ENCODE measurements at regions of chr1 and their contacts with region 1.

Region 1: GRCh38 chr1:226407497-226408284 is at the start of gene PARP1:
- DNase-seq: peak; percentile 97
- CTCF ChIP-seq: peak; percentile 72

Region 2: DNA sequence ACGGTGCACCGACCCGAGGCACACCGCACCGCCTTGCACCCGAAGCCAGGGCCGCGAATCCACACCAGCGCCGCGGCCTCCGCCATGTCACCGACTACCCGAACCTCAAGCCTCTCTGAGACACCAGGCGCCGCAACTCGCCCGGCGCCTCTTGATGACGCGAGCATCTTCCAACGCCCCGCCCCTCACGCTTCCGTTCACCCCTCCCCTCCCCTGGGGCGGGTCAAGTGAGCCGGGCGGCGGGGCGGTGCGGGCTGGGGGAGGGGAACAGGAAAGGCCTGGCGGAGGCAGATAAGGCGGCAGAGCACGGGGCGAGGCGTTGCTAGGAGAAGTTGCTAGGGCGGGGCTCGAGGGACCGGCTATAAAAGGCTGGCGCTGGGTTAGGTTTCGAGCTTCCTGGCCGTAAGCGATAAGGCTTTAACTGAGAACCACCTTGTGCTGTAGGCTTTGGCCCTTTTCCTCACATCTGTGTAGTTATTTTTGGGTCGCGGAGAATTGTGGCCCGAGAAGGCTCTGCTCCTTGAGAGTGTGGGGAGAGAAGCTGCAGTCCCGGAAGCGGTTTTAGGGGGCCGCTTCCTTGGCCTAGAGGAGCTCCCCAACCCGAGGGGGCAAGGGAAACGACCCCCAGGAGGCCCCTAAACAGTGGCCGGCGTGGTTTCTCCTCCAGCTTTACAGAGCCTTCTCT is 408.3 kb before region 1 on chr1 and contains the start of gene SDE2:
- CTCF ChIA-PET with region 1: no interaction called
- POLR2A ChIA-PET with region 1: no interaction called
- DNase-seq: peak; percentile 97
- CTCF ChIP-seq: no peak

Region 3: GRCh38 chr1:226046240-226046639 is 361.5 kb before region 1 on chr1:
- CTCF ChIA-PET with region 1: no interaction called
- POLR2A ChIA-PET with region 1: no interaction called
- DNase-seq: no peak
- CTCF ChIP-seq: no peak

Region 4: DNA sequence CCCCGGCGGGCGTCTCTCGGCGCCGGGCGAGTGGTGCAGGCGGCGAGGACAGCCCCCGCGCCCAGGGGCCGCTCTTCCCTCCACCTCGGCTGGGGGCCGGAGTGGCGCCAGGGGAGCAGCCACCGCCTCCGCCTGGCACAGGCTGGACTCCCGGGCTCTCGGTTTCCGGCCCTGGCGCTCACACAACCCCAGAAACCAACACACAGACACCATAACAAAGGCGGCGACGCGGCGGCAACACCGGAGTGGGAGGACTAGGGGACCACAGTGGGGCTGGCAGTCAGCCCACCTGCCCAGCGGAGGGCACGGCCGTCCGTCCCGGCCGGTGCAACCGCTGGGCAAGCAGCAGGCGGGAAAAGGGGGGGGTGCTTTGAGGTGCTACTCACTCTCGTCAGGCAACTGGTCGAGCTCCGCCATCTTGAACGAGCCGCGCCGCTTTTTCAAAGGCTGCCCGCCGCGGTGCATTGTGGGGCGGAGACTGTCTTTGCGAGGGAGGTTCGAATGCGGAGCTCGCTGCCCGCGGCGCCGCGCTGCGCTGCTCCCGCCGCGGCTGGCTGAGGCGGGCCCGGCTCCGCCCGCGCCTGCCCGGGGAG is 98.9 kb before region 1 on chr1 and contains the start of gene LIN9:
- CTCF ChIA-PET with region 1: interaction called, 12 read pairs
- POLR2A ChIA-PET with region 1: interaction called, 3 read pairs
- DNase-seq: peak; percentile 92
- CTCF ChIP-seq: no peak

Region 5: GRCh38 chr1:226390326-226391080 is 17.2 kb before region 1 on chr1:
- CTCF ChIA-PET with region 1: interaction called, 74 read pairs
- POLR2A ChIA-PET with region 1: no interaction called
- DNase-seq: no peak
- CTCF ChIP-seq: no peak

Region 6: DNA sequence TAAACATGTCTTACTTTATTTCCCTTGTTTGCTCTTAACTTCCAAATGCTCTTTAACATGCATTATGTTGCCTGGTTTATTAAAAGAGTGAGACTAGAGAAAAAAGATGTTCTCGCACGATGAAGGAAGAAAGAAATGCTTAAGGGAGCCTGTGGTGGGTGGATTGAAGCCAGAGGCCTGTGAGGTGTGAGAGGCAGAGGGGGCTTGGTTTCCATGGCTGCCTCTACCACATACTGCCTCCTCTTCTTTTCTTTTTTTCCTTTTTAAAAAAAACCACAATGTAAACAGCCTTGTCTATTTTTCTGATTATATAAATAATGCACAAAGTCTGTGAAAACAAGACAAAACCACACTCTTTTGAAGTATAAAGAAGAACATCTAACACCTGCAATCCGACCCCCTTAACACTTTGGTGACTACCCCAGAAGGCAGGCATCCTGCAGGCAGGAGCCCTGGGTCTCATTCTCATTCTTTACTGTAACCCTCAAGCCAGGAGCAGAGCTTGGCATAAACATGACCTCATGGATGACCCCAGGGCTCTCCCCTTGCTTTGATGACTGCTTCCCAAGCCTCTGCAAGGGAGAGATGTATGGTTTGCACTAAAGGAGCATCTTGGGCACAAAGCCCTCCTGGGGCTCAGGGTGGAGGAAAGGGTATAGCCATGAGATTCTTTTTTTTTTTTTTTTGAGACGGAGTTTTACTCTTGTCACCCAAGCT is 10.3 kb after region 1 on chr1:
- CTCF ChIA-PET with region 1: interaction called, 33 read pairs
- POLR2A ChIA-PET with region 1: no interaction called
- DNase-seq: no peak
- CTCF ChIP-seq: no peak

Region 7: GRCh38 chr1:226438007-226438406 is 30.3 kb after region 1 on chr1:
- CTCF ChIA-PET with region 1: interaction called, 10 read pairs
- POLR2A ChIA-PET with region 1: no interaction called
- DNase-seq: no peak
- CTCF ChIP-seq: no peak

Region 8: GRCh38 chr1:226466296-226466695 is 58.6 kb after region 1 on chr1:
- CTCF ChIA-PET with region 1: no interaction called
- POLR2A ChIA-PET with region 1: no interaction called
- DNase-seq: no peak
- CTCF ChIP-seq: no peak